Psoas muscle (tissue), 8 donors: ENCODE measurements at regions of chr7 and their contacts with region 1.

Region 1: DNA sequence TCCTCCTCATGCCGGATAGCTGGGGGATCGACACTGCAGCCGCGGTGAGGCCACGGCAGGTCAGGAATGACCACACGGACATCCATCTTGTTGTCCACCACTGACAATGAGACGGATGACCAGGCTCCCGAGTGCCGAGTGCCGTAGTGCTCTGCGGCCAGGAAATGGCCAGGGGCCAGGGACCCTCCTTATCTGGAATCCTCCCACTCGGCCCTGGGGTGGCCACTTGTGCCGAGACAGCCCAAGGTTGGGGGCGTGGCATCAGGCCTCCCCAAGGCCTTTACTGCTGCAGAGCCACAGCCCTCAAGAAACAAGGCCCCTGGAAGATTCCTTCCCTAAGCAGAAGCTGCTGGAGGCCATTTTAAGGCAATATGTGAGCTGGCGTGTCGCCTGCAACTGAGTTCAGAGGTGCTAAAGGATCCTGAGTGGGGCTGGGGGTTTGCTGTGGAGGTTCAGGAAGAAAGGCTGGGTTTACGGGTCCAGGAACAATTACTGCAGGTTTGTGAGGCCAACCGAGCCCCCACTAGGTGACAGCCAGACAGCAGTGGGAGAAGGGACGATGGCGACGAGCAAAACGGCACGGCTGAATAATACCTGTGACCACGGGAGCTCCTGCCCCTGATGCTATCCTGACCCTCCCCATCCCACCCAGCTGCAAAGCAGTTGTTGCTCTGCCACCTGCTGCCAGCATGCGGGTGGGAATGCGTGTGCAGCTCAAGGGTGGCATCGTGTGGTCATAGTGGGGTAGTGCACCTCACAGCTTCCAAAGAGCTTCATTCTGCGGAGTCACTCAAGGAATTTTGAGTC is 31.6 kb upstream of the LEP start:
- DNase-seq: peak; percentile 56 to 77
- ATAC-seq: peak; percentile 88 to 97 (median 96)
- H3K4me3 ChIP-seq: no peak overlapping the region
- H3K27ac ChIP-seq: no peak overlapping the region
- H3K4me1 ChIP-seq: no peaks in the 10 kb centered on the region
- H3K27me3 ChIP-seq: peaks cover 0 to 26% (median 0%) of the 10 kb centered on the region in 3 donors
- CTCF ChIP-seq: peak; percentile 97

Region 2: GRCh38 chr7:127557803-127558202 is 651.6 kb before region 1 on chr7:
- intact Hi-C with region 1: loop called in 1 of 2 experiments (anchors 5 kb)
- DNase-seq: no peak
- ATAC-seq: no peak
- H3K4me3 ChIP-seq: no peak overlapping the region
- H3K27ac ChIP-seq: no peak overlapping the region
- H3K4me1 ChIP-seq: no peaks in the 10 kb centered on the region
- H3K27me3 ChIP-seq: no peaks in the 10 kb centered on the region
- CTCF ChIP-seq: peak; percentile 16

Region 3: GRCh38 chr7:127708788-127709187 is 500.6 kb before region 1 on chr7:
- intact Hi-C with region 1: loop called (anchors 1 to 5 kb)
- DNase-seq: peak; percentile 38 to 58
- ATAC-seq: peak; percentile 66 to 93 (median 84)
- H3K4me3 ChIP-seq: no peak overlapping the region
- H3K27ac ChIP-seq: no peak overlapping the region
- H3K4me1 ChIP-seq: no peaks in the 10 kb centered on the region
- H3K27me3 ChIP-seq: no peaks in the 10 kb centered on the region
- CTCF ChIP-seq: peak; percentile 82

Region 4: DNA sequence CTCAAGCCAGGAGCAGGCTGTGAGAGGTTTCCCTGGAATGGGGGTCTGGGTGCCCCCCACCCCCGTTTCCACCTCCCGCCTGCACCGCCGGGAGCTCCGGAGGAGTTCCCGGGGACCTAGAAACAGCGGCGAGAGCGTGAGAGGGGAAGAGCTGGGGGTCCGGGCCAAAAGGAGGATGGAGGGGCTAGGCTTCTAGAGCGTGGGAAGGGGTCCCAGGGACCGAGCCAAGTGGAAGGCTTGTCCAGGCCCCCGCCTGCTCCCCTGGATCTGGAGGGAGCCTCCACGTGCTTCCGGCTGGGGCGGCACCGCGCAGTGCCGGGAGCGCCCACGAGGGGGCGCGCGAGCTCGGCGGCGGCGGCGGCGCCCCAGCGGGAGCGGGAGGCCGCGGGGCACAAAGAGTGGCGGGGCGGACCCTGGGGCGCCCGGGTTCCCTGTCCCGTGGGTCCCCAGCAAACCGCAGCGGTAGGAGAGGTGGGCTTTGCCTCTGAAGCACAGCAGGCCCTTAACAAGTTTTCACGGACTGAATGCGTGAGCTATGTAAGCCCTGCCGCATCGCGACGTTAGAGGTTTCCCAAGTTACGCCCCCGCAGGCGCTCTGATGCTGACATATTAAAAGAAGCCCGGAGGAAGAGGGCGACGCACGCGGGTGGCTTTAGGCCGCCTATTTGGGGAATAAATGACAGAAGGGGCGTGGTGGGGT is 73.8 kb before region 1 on chr7:
- intact Hi-C with region 1: loop called (anchors 1 to 2 kb)
- DNase-seq: peak; percentile 44 to 62
- ATAC-seq: peak; percentile 93 to 97 (median 94)
- H3K4me3 ChIP-seq: peak overlapping the region; percentile 66
- H3K27ac ChIP-seq: no peak overlapping the region
- H3K4me1 ChIP-seq: peaks cover 5% of the 10 kb centered on the region
- H3K27me3 ChIP-seq: peaks cover 0 to 71% (median 12%) of the 10 kb centered on the region in 3 donors
- CTCF ChIP-seq: peak; percentile 95

Region 5: DNA sequence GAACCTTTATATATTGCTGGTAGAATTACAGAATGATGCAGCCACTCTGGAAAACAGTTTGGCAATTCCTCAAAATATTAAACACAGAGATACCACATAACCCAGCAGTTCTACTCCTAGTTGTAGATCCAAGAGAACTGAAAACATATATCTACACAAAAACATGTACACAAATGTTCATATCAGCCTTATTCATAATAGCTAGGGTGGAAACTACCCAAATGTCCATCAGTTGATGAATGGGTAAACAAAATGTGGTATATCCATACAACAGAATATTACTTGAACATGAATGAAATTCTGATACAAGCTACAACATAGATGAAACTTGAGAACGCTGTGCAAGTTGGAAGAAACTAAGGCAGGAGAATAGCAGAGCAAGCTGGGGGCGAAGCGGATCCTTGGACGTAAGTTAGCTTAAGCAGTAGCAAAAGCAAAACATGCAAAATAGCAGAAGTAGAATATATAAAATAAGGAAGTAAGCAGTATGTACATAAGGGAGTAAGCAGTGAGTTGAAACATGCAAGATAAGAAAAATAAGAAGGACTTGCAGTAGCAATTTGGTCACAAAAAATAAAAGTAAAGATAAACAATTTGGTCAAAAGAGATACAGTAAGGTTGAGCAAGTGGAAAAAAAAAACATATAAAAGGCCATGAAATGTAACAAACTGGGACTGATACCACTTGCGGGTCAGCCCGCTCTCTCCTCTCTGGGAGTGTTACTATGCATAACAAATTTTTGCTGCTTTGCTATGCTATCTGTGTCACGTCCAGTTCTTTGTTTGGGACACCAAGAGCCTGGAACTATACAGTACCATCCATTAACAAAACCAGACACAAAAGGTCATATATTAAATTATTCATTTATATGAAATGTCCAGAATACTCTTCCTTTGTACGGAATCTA is 228.2 kb after region 1 on chr7:
- intact Hi-C with region 1: no loop called
- DNase-seq: no peak
- ATAC-seq: no peak
- H3K4me3 ChIP-seq: no peak overlapping the region
- H3K27ac ChIP-seq: no peak overlapping the region
- H3K4me1 ChIP-seq: no peaks in the 10 kb centered on the region
- H3K27me3 ChIP-seq: no peaks in the 10 kb centered on the region
- CTCF ChIP-seq: no peak

Region 6: DNA sequence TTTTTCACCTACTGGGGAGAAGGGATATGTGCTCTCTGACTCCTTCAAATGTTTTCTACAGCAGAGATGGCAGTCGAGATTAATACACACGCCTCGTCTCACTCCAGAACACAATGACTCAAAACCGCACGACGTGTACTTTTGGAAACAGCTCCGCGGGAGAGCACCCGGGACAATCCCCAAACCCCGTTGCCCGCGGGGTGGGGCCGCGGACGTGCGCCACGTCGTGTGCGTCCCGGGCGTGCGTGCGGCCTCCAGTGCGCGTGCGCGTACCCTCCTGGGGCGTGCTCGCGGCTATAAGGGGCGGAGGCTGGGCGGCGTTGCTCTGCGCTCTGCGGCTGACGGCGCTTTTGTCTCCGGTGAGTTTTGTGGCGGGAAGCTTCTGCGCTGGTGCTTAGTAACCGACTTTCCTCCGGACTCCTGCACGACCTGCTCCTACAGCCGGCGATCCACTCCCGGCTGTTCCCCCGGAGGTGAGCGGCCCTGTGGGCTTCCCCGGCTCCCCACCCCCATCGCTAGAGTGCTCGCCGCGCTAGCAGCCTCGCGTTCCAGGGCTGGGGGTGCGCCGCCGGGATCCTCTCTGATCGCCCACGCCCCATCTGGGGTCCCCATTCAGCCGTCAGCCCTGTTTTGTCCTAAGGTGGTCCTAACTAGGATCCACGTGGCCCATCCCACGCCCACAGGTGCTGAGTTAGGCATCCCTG is 246.3 kb after region 1 on chr7 and contains the start of gene HILPDA:
- intact Hi-C with region 1: no loop called
- DNase-seq: peak; percentile 96 to 97
- ATAC-seq: peak; percentile 96 to 98 (median 97)
- H3K4me3 ChIP-seq: peak within 1 kb of the TSS; percentile 94
- H3K27ac ChIP-seq: peak within 1 kb of the TSS; percentile 88
- H3K4me1 ChIP-seq: peaks cover 33% of the 10 kb centered on the region
- H3K27me3 ChIP-seq: no peaks in the 10 kb centered on the region
- CTCF ChIP-seq: no peak
- total RNA-seq, gene HILPDA: 1.9 to 6.0 (median 2.8) TPM